Right ventricle myocardium inferior (tissue), 1 donor: ENCODE measurements at regions of chr20 and their contacts with region 1.

Region 1: GRCh38 chr20:14888134-14888533 is 550.7 kb upstream of the FLRT3 start:
- DNase-seq: no peak
- ATAC-seq: no peak

Region 2: DNA sequence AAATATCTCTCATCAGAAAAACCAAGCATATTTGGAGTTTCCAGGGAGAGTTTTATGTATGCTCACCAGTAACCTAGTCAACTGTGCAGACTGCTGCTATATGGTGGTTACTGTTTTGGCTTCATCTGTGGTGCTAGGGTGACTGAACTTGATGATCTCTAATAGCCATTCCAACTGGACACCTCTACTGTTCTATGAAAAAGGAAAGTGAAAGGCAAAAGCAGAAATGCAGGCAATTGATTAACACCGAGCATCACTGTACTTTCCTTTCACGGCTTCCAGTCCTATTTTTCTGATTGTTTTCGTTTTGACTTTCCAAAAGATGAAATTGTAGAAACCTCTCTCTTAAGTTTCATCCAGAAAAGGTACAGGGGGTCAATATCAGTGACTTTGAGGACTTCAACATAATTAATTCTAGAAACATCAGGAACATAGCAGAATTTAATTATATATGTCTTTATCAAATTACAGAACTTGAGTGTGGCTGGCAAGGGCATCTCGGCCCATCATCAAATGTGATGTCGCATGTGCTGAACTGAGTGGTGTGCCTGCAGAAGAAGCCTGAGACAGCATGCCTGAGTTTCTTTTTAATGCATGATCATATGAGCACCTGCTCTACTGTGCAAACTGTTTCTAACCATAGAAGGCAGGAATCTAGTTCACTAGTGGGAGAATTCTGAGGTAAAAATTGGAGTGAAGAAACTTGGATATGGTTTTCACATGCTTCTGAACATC is 86.4 kb before region 1 on chr20:
- intact Hi-C with region 1: no loop called
- DNase-seq: no peak
- ATAC-seq: no peak

Region 3: DNA sequence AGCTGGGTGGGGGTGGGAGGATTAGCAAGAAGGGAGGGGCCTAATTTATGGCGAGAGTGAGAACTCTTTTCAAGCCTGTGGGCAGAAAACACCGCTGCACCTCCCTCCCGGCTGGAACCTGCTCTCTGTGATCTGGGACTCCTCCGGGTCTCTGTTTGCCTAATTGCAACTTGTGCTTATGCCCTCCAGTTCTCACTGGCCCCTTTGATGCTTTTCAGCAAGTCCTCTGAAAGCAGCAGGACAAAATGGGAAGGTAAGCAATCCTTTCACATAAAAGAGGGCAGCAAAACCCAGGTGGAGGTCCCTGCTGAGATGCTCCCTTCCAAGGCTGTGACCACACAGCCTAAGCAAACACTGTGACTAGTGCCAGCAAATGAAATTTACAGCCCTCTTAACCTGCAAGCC is 27.7 kb before region 1 on chr20:
- intact Hi-C with region 1: no loop called
- DNase-seq: no peak
- ATAC-seq: no peak

Region 4: DNA sequence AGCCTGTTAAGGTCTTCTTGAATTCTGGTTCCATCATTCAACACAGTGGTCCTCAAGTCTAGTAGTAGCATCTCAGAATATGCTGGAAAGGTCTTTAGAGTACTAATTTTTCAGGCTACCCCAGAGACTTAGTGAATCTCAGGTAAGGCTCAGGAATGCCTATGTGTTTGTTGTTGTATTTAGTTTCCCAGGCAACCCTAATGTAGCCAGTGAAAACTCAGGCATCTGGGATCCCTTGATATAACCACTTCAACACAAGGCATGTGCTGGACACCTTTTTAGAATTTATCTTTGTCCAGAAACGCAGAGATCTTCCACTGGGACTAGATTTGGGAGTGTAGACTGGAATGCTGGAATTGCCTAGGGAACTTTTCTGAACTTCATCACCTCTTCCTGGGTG is 47.2 kb after region 1 on chr20:
- intact Hi-C with region 1: loop called (anchors 10 kb)
- DNase-seq: no peak
- ATAC-seq: no peak